ENCODE measurements at regions of chr6 and their contacts with region 1.

Region 1: GRCh38 chr6:36759148-36759759 is 61.6 kb downstream of the RAB44 start:
- DNase-seq: no peak
- ATAC-seq: peak; percentile 67
- H3K4me3 ChIP-seq: no peak overlapping the region
- H3K27ac ChIP-seq: no peak overlapping the region
- H3K4me1 ChIP-seq: peaks cover 40% of the 10 kb centered on the region
- H3K27me3 ChIP-seq: no peaks in the 10 kb centered on the region
- CTCF ChIP-seq: peak; percentile 98 to 100 (median 98); a peak in 5 of 6 replicates
- EP300 ChIP-seq: no peak
- POLR2A ChIP-seq: no peak
- RAD21 ChIP-seq: peak; percentile 94

Region 2: DNA sequence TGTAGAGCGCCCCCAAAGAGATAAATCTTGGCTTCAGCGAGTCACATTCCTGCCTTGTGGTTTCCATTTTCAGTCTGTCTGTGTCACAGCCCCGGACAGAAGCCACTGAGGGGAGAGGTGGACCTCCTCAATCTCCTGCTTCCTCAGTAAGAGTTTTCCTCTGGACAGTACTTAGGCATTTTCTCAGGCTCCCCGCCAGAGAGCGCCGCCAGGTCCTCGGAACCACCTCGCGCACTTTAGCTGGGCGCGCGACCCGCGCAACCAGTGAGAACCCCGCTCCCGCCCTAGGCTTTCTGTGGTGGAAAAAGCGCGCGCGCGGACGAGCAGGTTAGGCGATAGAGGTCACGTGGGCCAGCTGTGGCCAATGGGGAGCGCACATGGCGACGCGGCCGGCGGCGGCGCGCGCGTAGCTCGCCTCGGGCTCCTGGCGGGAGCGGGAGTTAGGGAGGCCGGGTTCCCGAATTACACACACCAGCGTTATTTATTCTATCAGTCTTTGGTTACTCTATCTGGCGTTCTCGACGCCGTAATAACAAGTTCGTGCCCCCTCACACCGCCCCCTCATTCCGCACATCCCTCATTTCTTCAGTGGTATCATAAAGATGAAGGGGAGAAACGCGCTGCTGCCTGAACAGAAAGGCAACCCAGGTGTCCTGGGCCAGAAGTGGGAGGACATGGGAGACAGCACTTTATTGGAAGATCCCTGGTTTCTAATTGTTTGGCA is 336.0 kb before region 1 on chr6:
- CTCF ChIA-PET with region 1: interaction called, 7 read pairs
- POLR2A ChIA-PET with region 1: no interaction called
- RAD21 ChIA-PET with region 1: interaction called, 8 read pairs
- SMC1A ChIA-PET with region 1: no interaction called
- in situ Hi-C with region 1: no loop called
- intact Hi-C with region 1: loop called (anchors 2 kb)
- DNase-seq: peak; percentile 85
- ATAC-seq: peak; percentile 98
- H3K4me3 ChIP-seq: peak overlapping the region; percentile 69
- H3K27ac ChIP-seq: peak overlapping the region; percentile 82
- H3K4me1 ChIP-seq: peaks cover 8% of the 10 kb centered on the region
- H3K27me3 ChIP-seq: no peaks in the 10 kb centered on the region
- CTCF ChIP-seq: peak; percentile 74 to 84 (median 74)
- EP300 ChIP-seq: no peak
- POLR2A ChIP-seq: peak; percentile 80
- RAD21 ChIP-seq: peak; percentile 74

Region 3: DNA sequence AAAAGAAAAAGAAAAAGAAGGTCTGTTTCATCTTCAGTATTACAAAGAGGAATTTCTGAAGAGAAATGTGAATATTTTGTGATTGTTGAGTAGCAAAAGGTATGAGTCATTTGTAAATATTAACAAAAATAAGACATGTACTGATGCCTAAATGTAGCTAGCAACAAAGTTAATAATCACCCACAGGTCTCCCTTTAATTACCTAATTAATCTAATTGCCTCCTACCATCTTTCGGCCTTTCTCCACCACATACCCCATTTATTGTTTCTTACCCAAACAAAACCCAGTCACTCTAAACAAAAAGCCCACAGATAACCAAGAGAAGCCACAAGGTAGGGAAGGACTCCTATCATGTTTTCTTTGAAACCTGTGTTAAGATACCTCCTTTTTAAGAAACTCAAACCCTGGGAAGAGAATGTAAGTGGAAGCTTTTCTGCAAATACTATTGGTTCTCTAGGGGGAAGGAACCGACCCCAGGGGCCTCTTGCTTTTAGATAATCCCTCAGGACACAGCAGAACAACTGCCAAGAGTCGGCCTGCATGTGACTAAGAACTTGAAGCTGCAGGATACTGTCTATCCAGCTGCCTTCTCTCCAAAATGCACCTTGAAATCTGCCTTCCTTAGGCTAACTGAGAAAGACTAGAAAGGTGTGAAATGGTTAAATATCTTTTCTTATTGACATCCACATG is 195.9 kb before region 1 on chr6:
- CTCF ChIA-PET with region 1: no interaction called
- POLR2A ChIA-PET with region 1: no interaction called
- RAD21 ChIA-PET with region 1: no interaction called
- SMC1A ChIA-PET with region 1: no interaction called
- in situ Hi-C with region 1: no loop called
- intact Hi-C with region 1: no loop called
- DNase-seq: no peak
- ATAC-seq: no peak
- H3K4me3 ChIP-seq: no peak overlapping the region
- H3K27ac ChIP-seq: no peak overlapping the region
- H3K4me1 ChIP-seq: no peaks in the 10 kb centered on the region
- H3K27me3 ChIP-seq: no peaks in the 10 kb centered on the region
- CTCF ChIP-seq: no peak
- EP300 ChIP-seq: no peak
- POLR2A ChIP-seq: no peak
- RAD21 ChIP-seq: no peak

Region 4: DNA sequence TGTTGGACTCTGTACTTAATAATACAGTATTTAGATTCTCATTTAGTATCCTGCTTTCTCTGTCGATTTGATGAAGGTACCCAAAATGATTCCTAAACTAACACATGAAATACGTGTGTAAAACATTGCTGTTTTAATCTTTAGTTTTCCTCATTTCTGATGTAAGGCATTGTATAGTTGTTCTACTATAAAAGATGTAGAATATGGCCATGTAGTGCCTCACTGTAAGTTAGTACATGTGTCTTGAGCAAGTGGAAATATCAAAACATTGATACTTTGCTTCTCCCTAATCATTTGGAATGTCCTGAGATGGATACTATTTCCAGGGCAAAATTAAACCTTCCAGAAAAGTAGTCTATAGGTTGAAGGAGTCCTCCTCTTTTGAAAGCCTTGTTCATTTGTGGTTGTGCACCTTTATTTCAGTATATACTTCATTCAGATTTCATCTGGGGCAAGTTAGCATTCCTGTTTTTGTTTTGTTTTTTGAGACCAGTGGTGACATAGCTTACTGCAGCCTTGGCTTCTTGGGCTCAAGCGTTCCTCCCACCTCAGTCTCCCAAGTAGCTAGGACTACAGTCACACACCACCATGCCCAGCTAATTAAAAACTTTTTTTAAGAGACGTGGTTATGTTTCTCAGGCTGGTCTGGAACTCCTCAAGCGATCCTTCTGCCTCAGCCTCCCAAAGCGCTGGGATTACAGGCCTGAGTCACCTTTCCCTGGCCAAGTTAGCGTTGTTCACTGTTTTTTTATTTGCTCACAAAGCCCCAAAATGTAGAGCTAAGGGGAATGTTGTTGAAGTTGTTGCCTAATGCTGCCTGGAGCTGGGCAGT is 153.5 kb before region 1 on chr6:
- CTCF ChIA-PET with region 1: interaction called, 22 read pairs
- POLR2A ChIA-PET with region 1: interaction called, 5 read pairs
- RAD21 ChIA-PET with region 1: interaction called, 5 read pairs
- SMC1A ChIA-PET with region 1: interaction called, 9 read pairs
- in situ Hi-C with region 1: no loop called
- intact Hi-C with region 1: no loop called
- DNase-seq: no peak
- ATAC-seq: peak; percentile 19
- H3K4me3 ChIP-seq: no peak overlapping the region
- H3K27ac ChIP-seq: no peak overlapping the region
- H3K4me1 ChIP-seq: no peaks in the 10 kb centered on the region
- H3K27me3 ChIP-seq: no peaks in the 10 kb centered on the region
- CTCF ChIP-seq: 0 out of 6 replicates have a peak, but pooled peaks of 1 of the 3 experiments have one; percentile 7
- EP300 ChIP-seq: no peak
- POLR2A ChIP-seq: peak; percentile 49; the same call in 1 of the 2 replicates
- RAD21 ChIP-seq: no peak

Region 5: DNA sequence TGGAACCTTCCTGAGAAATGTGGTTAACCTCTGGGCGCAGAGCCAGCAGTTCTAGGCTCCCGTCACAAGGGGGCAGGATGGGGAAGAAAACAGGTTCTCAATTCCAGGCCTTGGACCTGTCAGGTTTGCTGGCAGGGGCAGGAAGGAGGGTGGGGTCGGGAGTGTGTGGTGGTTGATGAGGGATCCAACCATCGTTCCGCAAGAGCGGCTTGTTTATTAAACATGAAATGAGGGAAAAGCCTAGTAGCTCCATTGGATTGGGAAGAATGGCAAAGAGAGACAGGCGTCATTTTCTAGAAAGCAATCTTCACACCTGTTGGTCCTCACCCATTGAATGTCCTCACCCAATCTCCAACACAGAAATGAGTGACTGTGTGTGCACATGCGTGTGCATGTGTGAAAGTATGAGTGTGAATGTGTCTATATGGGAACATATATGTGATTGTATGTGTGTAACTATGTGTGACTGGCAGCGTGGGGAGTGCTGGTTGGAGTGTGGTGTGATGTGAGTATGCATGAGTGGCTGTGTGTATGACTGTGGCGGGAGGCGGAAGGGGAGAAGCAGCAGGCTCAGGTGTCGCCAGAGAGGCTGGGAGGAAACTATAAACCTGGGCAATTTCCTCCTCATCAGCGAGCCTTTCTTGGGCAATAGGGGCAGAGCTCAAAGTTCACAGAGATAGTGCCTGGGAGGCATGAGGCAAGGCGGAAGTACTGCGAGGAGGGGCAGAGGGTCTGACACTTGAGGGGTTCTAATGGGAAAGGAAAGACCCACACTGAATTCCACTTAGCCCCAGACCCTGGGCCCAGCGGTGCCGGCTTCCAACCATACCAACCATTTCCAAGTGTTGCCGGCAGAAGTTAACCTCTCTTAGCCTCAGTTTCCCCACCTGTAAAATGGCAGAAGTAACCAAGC is 135.5 kb before region 1 on chr6:
- CTCF ChIA-PET with region 1: interaction called, 54 read pairs
- POLR2A ChIA-PET with region 1: interaction called, 5 read pairs
- RAD21 ChIA-PET with region 1: interaction called, 18 read pairs
- SMC1A ChIA-PET with region 1: interaction called, 31 read pairs
- in situ Hi-C with region 1: loop called (anchors 5 kb)
- intact Hi-C with region 1: loop called (anchors 1 kb)
- DNase-seq: peak; percentile 68
- ATAC-seq: peak; percentile 84
- H3K4me3 ChIP-seq: no peak overlapping the region
- H3K27ac ChIP-seq: peak overlapping the region; percentile 63
- H3K4me1 ChIP-seq: peaks cover 35% of the 10 kb centered on the region
- H3K27me3 ChIP-seq: no peaks in the 10 kb centered on the region
- CTCF ChIP-seq: peak; percentile 89 to 95 (median 95)
- EP300 ChIP-seq: no peak
- POLR2A ChIP-seq: no peak
- RAD21 ChIP-seq: peak; percentile 98

Region 6: DNA sequence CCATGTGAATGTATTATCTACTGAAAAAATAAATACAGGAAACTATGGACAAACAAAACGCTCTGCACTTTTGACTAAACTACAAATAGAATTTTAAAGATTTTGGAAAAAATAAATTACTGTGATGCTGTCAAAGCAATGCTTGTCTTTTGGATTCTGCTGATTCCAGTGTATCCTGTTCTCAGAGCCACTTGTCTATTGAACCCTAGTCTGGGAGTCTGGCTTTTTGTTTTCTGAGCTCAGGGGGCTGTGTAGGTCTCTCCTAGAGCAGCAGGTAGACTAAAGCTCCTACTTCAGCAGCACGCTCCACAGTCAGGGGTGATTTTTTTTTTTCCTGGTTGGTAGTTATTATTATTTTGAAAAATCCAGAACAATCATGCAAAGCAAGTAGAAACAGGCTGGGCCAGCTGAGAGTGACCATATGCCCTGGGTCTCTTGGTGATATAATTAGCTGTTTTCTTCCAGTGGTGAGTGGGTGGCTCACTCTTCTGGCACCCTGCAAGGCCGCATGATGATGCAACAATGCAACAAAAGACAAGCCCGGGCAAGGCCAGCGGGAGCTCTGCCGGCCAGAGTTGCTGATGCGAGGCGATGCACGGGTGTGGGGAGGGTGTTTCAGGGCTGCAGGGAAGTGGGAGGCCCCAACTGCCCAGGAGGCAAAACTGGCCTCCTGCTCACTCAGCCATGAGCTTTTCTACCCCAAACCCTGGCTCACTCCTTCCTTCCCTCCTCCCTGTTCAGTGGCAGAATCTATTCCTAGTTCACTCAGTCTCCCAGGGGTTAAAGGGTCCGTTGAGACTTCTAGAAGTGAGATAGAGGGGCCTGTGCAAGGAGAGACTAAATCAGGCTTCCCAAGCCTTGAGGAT is 92.3 kb before region 1 on chr6:
- CTCF ChIA-PET with region 1: interaction called, 25 read pairs
- POLR2A ChIA-PET with region 1: interaction called, 9 read pairs
- RAD21 ChIA-PET with region 1: interaction called, 57 read pairs
- SMC1A ChIA-PET with region 1: interaction called, 13 read pairs
- in situ Hi-C with region 1: no loop called
- intact Hi-C with region 1: no loop called
- DNase-seq: peak; percentile 91
- ATAC-seq: peak; percentile 86
- H3K4me3 ChIP-seq: peak overlapping the region; percentile 41; the same call in 1 of the 2 replicates
- H3K27ac ChIP-seq: peak overlapping the region; percentile 92
- H3K4me1 ChIP-seq: peaks cover 64% of the 10 kb centered on the region
- H3K27me3 ChIP-seq: no peaks in the 10 kb centered on the region
- CTCF ChIP-seq: no peak; a peak in 1 of 6 replicates
- EP300 ChIP-seq: peak; percentile 94 to 97
- POLR2A ChIP-seq: peak; percentile 49
- RAD21 ChIP-seq: no peak; the same call in 1 of the 2 replicates

Region 7: DNA sequence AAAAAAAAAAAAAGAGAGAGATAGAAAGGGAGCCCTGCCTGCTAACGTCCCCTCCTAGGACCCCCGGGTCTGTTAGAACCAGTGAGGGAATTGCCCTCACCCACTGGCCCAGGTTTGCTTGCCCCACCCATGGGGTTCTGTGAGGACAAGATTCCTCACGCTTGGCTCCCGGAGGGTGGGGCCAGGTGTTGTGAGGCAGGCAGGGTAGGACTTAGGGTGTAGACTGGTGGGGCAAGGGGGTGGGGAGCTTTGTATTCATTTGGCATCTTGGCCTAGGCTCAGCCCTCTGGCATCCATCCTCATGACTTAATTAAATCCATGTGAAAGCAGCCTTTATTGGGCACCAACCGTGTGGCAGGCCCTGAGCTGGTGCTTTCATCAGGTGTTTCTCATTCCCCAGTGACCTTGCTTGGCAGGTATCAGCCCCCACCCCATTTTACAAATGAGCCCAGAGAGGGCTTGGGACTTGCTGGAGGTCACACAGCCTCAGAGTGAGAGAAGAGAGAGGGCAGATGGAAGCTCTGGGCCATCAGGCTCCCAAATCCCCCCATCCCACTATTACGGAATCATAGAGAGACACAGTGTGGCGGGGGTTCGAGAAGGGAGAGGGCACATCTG is 42.7 kb before region 1 on chr6:
- CTCF ChIA-PET with region 1: interaction called, 14 read pairs
- POLR2A ChIA-PET with region 1: interaction called, 5 read pairs
- RAD21 ChIA-PET with region 1: interaction called, 11 read pairs
- SMC1A ChIA-PET with region 1: interaction called, 14 read pairs
- in situ Hi-C with region 1: no loop called
- intact Hi-C with region 1: no loop called
- DNase-seq: no peak
- ATAC-seq: no peak
- H3K4me3 ChIP-seq: no peak overlapping the region
- H3K27ac ChIP-seq: no peak overlapping the region
- H3K4me1 ChIP-seq: peaks cover 14% of the 10 kb centered on the region
- H3K27me3 ChIP-seq: no peaks in the 10 kb centered on the region
- CTCF ChIP-seq: no peak
- EP300 ChIP-seq: no peak
- POLR2A ChIP-seq: no peak
- RAD21 ChIP-seq: no peak

Region 8: DNA sequence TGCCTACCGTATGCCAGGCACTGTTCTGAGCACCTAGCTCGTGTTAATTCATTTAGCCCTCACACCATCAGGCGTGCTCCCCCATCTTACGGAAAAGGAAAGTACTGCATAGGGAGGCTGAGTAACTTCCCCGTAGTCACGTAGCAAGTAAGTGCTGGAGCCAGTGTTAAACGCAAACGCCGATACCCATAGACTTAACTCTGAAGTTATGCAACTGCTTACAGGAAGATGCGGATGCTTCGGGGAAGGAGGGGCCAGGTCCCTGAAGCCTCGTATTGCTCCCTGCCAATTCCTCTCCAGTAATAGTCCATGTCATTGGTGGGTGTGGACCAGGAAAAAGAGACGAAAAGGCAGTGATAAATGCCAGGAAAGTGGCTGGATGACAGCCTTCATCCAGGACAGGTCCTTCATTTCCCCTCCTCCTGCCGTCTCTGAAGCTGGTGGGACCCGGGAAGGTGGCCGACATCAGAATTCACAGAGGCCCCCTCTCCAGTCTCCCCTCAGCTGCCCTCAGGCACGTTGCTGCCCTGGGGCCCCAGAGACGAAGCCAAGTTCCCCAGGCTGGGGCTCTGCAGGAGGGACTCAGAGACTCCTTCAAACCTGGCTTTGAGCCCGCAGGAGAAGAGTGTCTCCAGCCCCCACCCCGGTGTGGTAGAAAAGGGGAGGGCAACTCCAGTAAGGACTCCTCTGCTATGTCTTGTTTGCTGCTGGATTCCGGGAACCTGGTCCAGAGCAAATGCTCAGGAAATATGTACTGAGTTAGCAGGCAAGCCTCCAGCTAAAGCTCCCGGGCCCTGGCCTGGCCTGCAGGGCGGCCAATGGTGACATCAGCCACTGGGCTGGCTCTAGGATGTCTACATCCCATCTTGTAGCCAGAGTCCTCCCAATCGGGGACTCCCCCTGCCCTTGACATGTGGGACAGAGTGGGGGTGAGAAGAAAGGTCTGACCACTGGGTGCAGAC is 23.9 kb before region 1 on chr6:
- CTCF ChIA-PET with region 1: interaction called, 61 read pairs
- POLR2A ChIA-PET with region 1: no interaction called
- RAD21 ChIA-PET with region 1: interaction called, 22 read pairs
- SMC1A ChIA-PET with region 1: interaction called, 14 read pairs
- in situ Hi-C with region 1: no loop called
- intact Hi-C with region 1: no loop called
- DNase-seq: no peak
- ATAC-seq: peak; percentile 61
- H3K4me3 ChIP-seq: no peak overlapping the region
- H3K27ac ChIP-seq: no peak overlapping the region
- H3K4me1 ChIP-seq: no peaks in the 10 kb centered on the region; the same call in 1 of the 2 replicates
- H3K27me3 ChIP-seq: no peaks in the 10 kb centered on the region
- CTCF ChIP-seq: peak in 1 of 3 experiments; percentile 32; a peak in 1 of 6 replicates
- EP300 ChIP-seq: no peak
- POLR2A ChIP-seq: no peak
- RAD21 ChIP-seq: peak; percentile 39; the same call in 1 of the 2 replicates

Measured in GM12878 (cell line).